Activated CD8-positive, alpha-beta T cell treated with anti-CD3 and anti-CD28 coated beads, Interleukin-2, amount 10 ng/mL, durations not matched to agents 7 days and 5 days (primary cell): ENCODE measurements at regions of chr12 and their contacts with region 1.

Region 1: GRCh38 chr12:11545484-11546330 is 103.8 kb upstream of the ETV6 start:
- DNase-seq: peak; percentile 83
- ATAC-seq: peak; percentile 88
- H3K4me3 Mint-ChIP-seq: peak overlapping the region; percentile 57
- H3K27ac Mint-ChIP-seq: peak overlapping the region; percentile 98
- H3K4me1 Mint-ChIP-seq: peaks cover 56% of the 10 kb centered on the region
- H3K27me3 Mint-ChIP-seq: no peaks in the 10 kb centered on the region

Region 2: GRCh38 chr12:11171145-11171968 is 374.4 kb before region 1 on chr12 and contains the start of gene SMIM10L1:
- CTCF ChIA-PET with region 1: interaction called, 3 read pairs
- POLR2A ChIA-PET with region 1: interaction called, 10 read pairs
- DNase-seq: peak; percentile 93
- ATAC-seq: peak; percentile 98
- H3K4me3 Mint-ChIP-seq: peak within 1 kb of the TSS; percentile 97
- H3K27ac Mint-ChIP-seq: peak within 1 kb of the TSS; percentile 100
- H3K4me1 Mint-ChIP-seq: peaks cover 54% of the 10 kb centered on the region
- H3K27me3 Mint-ChIP-seq: no peaks in the 10 kb centered on the region
- total RNA-seq, gene SMIM10L1: 8.9 to 9.5 TPM

Region 3: GRCh38 chr12:11486623-11487444 is 58.9 kb before region 1 on chr12:
- CTCF ChIA-PET with region 1: interaction called, 25 read pairs
- POLR2A ChIA-PET with region 1: no interaction called
- DNase-seq: peak; percentile 90
- ATAC-seq: peak; percentile 93
- H3K4me3 Mint-ChIP-seq: no peak overlapping the region
- H3K27ac Mint-ChIP-seq: no peak overlapping the region
- H3K4me1 Mint-ChIP-seq: peaks cover 5% of the 10 kb centered on the region
- H3K27me3 Mint-ChIP-seq: peaks cover 17% of the 10 kb centered on the region

Region 4: GRCh38 chr12:11508699-11509098 is 37.0 kb before region 1 on chr12:
- CTCF ChIA-PET with region 1: interaction called, 18 read pairs
- POLR2A ChIA-PET with region 1: no interaction called
- DNase-seq: no peak
- ATAC-seq: no peak
- H3K4me3 Mint-ChIP-seq: no peak overlapping the region
- H3K27ac Mint-ChIP-seq: no peak overlapping the region
- H3K4me1 Mint-ChIP-seq: no peaks in the 10 kb centered on the region
- H3K27me3 Mint-ChIP-seq: peaks cover 5% of the 10 kb centered on the region

Region 5: GRCh38 chr12:11648831-11649702 is 103.4 kb after region 1 on chr12 and contains the start of gene ETV6:
- CTCF ChIA-PET with region 1: interaction called, 3 read pairs
- POLR2A ChIA-PET with region 1: interaction called, 11 read pairs
- DNase-seq: peak; percentile 77
- ATAC-seq: peak; percentile 63
- H3K4me3 Mint-ChIP-seq: peak within 1 kb of the TSS; percentile 90
- H3K27ac Mint-ChIP-seq: peak within 1 kb of the TSS; percentile 97
- H3K4me1 Mint-ChIP-seq: peaks cover 33% of the 10 kb centered on the region
- H3K27me3 Mint-ChIP-seq: peaks cover 8% of the 10 kb centered on the region
- total RNA-seq, gene ETV6: 22.1 to 26.1 TPM

Region 6: DNA sequence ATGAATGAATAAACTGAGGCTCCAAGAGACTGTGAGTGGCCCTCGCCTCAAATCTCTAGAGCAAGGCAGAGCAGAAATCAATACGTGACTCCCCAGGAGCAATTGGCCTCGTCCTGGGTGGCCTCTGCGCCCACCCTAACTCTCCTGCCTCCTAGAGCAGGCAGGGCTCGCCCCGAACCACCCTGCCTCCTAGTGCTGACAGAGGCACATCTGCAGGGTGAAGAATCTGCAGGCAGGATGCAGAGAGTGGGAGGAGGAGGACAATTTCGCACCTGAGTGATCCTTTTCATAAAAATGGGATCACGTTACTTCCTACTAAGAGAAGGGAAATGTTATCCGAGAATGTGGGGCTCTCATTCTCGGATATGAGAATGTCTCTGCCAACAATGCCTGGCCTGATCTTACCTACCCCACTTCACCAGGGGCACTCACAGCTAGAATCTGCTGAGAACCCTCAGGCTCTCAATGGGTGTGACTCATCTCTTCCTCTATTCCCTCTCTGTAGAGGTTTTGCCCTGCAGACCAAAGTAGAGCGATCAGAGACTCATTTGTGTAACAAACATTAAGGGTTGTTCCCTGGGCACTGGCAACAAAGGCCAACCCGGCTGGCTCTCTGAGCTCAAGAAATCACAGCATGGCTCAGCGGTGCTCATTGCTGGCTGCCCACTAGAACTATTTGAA is 463.4 kb after region 1 on chr12:
- CTCF ChIA-PET with region 1: interaction called, 14 read pairs
- POLR2A ChIA-PET with region 1: no interaction called
- DNase-seq: peak; percentile 70
- ATAC-seq: peak; percentile 75
- H3K4me3 Mint-ChIP-seq: peak overlapping the region; percentile 69
- H3K27ac Mint-ChIP-seq: peak overlapping the region; percentile 95
- H3K4me1 Mint-ChIP-seq: peaks cover 64% of the 10 kb centered on the region
- H3K27me3 Mint-ChIP-seq: peaks cover 7% of the 10 kb centered on the region